ENCODE measurements at regions of chr1 and their contacts with region 1.

Region 1: GRCh38 chr1:226827968-226828513 is 42.4 kb upstream of the PSEN2 start:
- DNase-seq: peak; percentile 95 to 97 (median 96)
- ATAC-seq: peak; percentile 100
- H3K4me3 ChIP-seq: no peak overlapping the region
- H3K27ac ChIP-seq: no peak overlapping the region; the same call in 2 of the 3 replicates
- H3K4me1 ChIP-seq: peaks cover 5 to 7% of the 10 kb centered on the region in 2 experiments; a peak in 3 of 5 replicates
- H3K27me3 ChIP-seq: peaks cover 46 to 59% of the 10 kb centered on the region in 2 experiments
- CTCF ChIP-seq: peak; percentile 95 to 97 (median 96)
- EP300 ChIP-seq: no peak
- POLR2A ChIP-seq: no peak
- RAD21 ChIP-seq: peak; percentile 94 to 99

Region 2: DNA sequence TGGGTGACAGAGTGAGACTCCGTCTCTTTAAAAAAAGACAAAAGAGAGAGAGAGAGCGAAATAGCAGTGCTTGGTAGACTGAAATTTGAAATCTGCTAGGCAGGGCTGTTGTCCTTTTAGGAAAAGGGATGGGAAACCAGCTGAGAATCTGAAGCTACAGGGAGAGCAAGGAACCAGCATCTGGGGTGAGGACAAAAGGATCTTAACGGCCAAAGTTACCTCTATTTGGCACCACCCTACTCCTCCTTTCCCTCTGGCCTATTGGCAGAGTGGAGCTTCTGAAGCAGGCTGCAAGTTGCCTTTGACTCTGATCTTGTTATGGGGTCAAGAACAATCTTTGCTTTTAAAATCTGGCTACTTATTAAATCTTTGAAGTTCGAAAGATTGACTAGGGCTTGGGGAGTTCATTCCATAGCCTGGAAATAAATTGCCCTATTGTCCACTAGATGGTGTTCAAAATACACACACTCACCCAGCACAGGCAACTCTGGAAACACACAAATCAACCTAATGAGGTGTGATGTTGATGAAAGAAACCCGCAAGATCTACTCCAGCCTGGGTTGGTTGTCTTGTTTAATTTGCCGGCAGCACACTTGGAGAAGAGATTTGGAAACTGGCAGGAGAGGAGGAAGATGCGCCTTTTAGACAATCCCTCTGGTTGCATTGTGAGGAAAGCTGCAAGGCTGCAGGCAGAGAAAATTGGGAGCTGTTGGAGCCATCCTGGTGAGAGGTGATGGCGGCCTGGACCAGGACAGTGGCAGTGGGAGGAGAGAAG is 403.6 kb before region 1 on chr1:
- CTCF ChIA-PET with region 1: no interaction called
- POLR2A ChIA-PET with region 1: no interaction called
- in situ Hi-C with region 1: no loop called
- intact Hi-C with region 1: loop called (anchors 10 kb)
- DNase-seq: peak in 2 of 4 experiments; percentile 52 to 61
- ATAC-seq: peak; percentile 92
- H3K4me3 ChIP-seq: no peak overlapping the region
- H3K27ac ChIP-seq: no peak overlapping the region
- H3K4me1 ChIP-seq: no peaks in the 10 kb centered on the region; a peak in 1 of 5 replicates
- H3K27me3 ChIP-seq: peaks cover 24 to 40% of the 10 kb centered on the region in 2 experiments
- CTCF ChIP-seq: peak; percentile 63 to 85 (median 67)
- EP300 ChIP-seq: no peak
- POLR2A ChIP-seq: no peak
- RAD21 ChIP-seq: peak; percentile 81 to 82

Region 3: DNA sequence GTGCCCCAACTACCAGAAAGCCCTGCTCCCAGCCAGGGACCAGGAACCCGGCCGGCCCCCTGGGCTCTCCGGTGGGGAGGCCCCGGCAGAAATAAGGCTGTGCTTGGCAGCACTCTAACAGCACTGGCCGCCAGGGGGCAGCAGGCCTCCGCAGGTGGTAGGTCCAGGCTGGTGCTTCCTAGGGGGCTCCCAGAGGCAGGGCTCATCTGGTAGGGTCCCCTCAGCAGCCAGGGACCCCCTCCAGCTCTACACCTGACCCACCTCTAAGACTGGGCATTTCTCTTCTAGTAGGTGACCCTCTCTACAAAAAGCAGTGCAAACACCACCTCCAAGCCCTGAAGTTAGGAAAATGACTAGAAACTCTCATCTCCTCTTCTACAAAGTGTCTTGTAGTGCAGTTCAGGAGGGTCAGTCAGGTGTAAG is 193.9 kb before region 1 on chr1:
- CTCF ChIA-PET with region 1: interaction called, 32 read pairs
- POLR2A ChIA-PET with region 1: interaction called, 3 read pairs
- in situ Hi-C with region 1: loop called (anchors 5 kb)
- intact Hi-C with region 1: loop called (anchors 1 kb)
- DNase-seq: peak; percentile 83 to 87 (median 84)
- ATAC-seq: peak; percentile 94
- H3K4me3 ChIP-seq: no peak overlapping the region
- H3K27ac ChIP-seq: no peak overlapping the region
- H3K4me1 ChIP-seq: peaks cover 0 to 17% of the 10 kb centered on the region in 2 experiments; a peak in 2 of 5 replicates
- H3K27me3 ChIP-seq: peaks cover 22 to 79% of the 10 kb centered on the region in 2 experiments
- CTCF ChIP-seq: peak; percentile 93 to 96 (median 95)
- EP300 ChIP-seq: no peak
- POLR2A ChIP-seq: no peak
- RAD21 ChIP-seq: peak; percentile 93 to 98

Region 4: GRCh38 chr1:226657895-226658545 is 170.0 kb before region 1 on chr1:
- CTCF ChIA-PET with region 1: no interaction called
- POLR2A ChIA-PET with region 1: no interaction called
- in situ Hi-C with region 1: no loop called
- intact Hi-C with region 1: no loop called
- DNase-seq: no peak
- ATAC-seq: no peak
- H3K4me3 ChIP-seq: no peak overlapping the region
- H3K27ac ChIP-seq: no peak overlapping the region
- H3K4me1 ChIP-seq: no peaks in the 10 kb centered on the region; a peak in 1 of 5 replicates
- H3K27me3 ChIP-seq: peaks cover 55 to 80% of the 10 kb centered on the region in 2 experiments
- CTCF ChIP-seq: no peak
- EP300 ChIP-seq: no peak
- POLR2A ChIP-seq: no peak
- RAD21 ChIP-seq: no peak

Region 5: DNA sequence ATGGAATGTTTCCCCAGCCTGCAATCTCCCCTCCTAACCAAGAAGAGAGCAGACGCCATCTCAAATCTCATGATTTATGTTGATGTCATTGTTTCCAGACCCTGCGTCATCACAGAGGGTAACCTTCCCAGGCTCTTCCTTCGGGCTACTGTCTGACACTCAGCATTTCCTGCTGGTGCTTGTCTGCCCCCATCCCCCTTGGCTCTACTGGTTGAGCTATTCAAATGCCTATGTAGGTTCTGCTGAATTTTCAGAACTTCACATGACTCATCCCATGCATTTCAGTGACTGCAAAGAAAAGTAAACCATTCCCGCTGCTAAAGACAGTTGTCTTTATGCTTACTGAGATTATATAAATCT is 64.2 kb before region 1 on chr1:
- CTCF ChIA-PET with region 1: no interaction called
- POLR2A ChIA-PET with region 1: no interaction called
- in situ Hi-C with region 1: no loop called
- intact Hi-C with region 1: loop called (anchors 5 kb)
- DNase-seq: no peak
- ATAC-seq: 0 out of 3 replicates have a peak, but pooled peaks have one; percentile 35
- H3K4me3 ChIP-seq: no peak overlapping the region
- H3K27ac ChIP-seq: no peak overlapping the region
- H3K4me1 ChIP-seq: no peaks in the 10 kb centered on the region
- H3K27me3 ChIP-seq: peaks cover 36 to 50% of the 10 kb centered on the region in 2 experiments
- CTCF ChIP-seq: no peak
- EP300 ChIP-seq: no peak
- POLR2A ChIP-seq: no peak
- RAD21 ChIP-seq: no peak

Region 6: GRCh38 chr1:227299241-227299627 is 471.2 kb after region 1 on chr1:
- CTCF ChIA-PET with region 1: no interaction called
- POLR2A ChIA-PET with region 1: no interaction called
- in situ Hi-C with region 1: no loop called
- intact Hi-C with region 1: no loop called
- DNase-seq: no peak
- ATAC-seq: no peak
- H3K4me3 ChIP-seq: no peak overlapping the region
- H3K27ac ChIP-seq: peak overlapping the region; percentile 42; the same call in 2 of the 3 replicates
- H3K4me1 ChIP-seq: peaks cover 5 to 21% of the 10 kb centered on the region in 2 experiments; a peak in 3 of 5 replicates
- H3K27me3 ChIP-seq: no peaks in the 10 kb centered on the region
- CTCF ChIP-seq: no peak
- EP300 ChIP-seq: 0 out of 2 replicates have a peak, but pooled peaks have one; percentile 9
- POLR2A ChIP-seq: no peak
- RAD21 ChIP-seq: no peak

Region 7: GRCh38 chr1:227437495-227438008 is 609.5 kb after region 1 on chr1:
- CTCF ChIA-PET with region 1: no interaction called
- POLR2A ChIA-PET with region 1: no interaction called
- in situ Hi-C with region 1: no loop called
- intact Hi-C with region 1: loop called (anchors 2 kb)
- DNase-seq: peak; percentile 47 to 83 (median 65)
- ATAC-seq: peak; percentile 88
- H3K4me3 ChIP-seq: 0 out of 2 replicates have a peak overlapping the region, but pooled peaks have one; percentile 9
- H3K27ac ChIP-seq: peak overlapping the region; percentile 43; the same call in 1 of the 3 replicates
- H3K4me1 ChIP-seq: peaks cover 4 to 22% of the 10 kb centered on the region in 2 experiments; a peak in 4 of 5 replicates
- H3K27me3 ChIP-seq: no peaks in the 10 kb centered on the region
- CTCF ChIP-seq: peak; percentile 59 to 82 (median 67); a peak in 5 of 6 replicates
- EP300 ChIP-seq: no peak
- POLR2A ChIP-seq: no peak
- RAD21 ChIP-seq: peak; percentile 95 to 96